Esophagus muscularis mucosa (tissue), 4 donors: ENCODE measurements at regions of chr15 and their contacts with region 1.

Region 1: GRCh38 chr15:64046347-64047153 is at the start of gene DAPK2:
- DNase-seq: no peak
- H3K4me3 ChIP-seq: peak within 1 kb of the TSS; percentile 61 to 65 (median 62)
- H3K27ac ChIP-seq: peak within 1 kb of the TSS in 1 of 4 donors; percentile 46
- H3K4me1 ChIP-seq: peaks cover 16 to 27% (median 21%) of the 10 kb centered on the region in 4 donors
- H3K27me3 ChIP-seq: peaks cover 0 to 26% (median 0%) of the 10 kb centered on the region in 4 donors
- CTCF ChIP-seq: peak; percentile 65 to 73 (median 73)
- EP300 ChIP-seq: no peak
- POLR2A ChIP-seq: no peak
- total RNA-seq, gene DAPK2: 1.5 to 11.2 (median 7.3) TPM

Region 2: DNA sequence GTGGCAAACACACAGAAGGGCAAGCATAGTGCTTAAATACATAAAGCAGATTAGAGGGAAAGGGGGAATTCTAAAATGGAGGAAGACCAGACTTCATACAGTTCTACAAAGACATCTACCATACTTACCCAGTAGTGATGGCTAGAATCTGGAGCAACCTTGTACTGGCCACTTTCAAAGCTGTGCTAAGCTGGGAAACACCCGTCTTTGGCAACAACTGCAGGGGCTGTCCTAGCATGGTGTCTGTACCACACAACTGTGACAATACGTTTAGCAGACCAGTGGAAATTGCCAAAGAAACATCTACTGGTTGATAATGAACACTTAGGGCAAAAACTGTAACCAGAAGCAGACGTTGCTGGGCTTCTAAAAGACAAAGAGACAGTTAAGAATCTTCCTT is 352.4 kb before region 1 on chr15:
- intact Hi-C with region 1: no loop called
- DNase-seq: no peak
- H3K4me3 ChIP-seq: no peak overlapping the region
- H3K27ac ChIP-seq: no peak overlapping the region
- H3K4me1 ChIP-seq: no peaks in the 10 kb centered on the region
- H3K27me3 ChIP-seq: no peaks in the 10 kb centered on the region
- CTCF ChIP-seq: no peak
- EP300 ChIP-seq: no peak
- POLR2A ChIP-seq: no peak

Region 3: GRCh38 chr15:63833021-63833696 is 213.4 kb before region 1 on chr15:
- intact Hi-C with region 1: loop called (anchors 10 kb)
- DNase-seq: no peak
- H3K4me3 ChIP-seq: peak overlapping the region; percentile 76 to 87 (median 79)
- H3K27ac ChIP-seq: peak overlapping the region; percentile 88 to 94 (median 92)
- H3K4me1 ChIP-seq: peaks cover 17 to 47% (median 33%) of the 10 kb centered on the region in 4 donors
- H3K27me3 ChIP-seq: no peaks in the 10 kb centered on the region
- CTCF ChIP-seq: no peak
- EP300 ChIP-seq: no peak
- POLR2A ChIP-seq: no peak

Region 4: DNA sequence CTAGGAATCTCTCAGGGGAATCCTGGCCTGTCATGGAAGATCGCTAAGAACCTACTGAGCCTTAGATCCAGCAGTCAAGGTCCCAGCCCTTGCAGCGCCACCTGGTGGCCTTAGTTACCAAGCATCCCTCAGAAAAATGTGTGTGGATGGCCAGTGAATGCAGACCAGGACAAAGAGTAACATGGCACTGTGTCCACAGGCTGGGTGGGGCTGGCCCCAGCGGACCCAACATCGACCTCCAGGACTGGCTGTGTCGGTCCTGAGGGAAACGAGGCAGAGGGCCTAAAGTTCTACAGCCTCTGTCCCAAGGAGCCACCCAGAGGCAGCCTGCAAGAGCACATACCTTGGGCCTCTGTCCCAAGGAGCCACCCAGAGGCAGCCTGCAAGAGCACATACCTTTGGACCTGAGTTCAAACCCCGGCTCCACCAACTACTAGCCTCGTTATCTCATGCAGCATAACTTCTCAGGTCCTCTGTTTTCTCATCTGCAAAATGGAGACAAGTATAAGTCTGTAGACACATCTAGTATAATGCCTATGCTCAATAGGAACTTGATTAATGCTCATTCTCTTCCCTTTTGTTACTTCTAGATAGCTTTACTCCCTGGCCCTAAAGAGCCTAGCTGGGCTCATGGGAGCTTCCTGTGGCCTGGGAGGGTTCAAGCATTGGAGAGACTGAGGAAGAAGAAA is 155.3 kb before region 1 on chr15:
- intact Hi-C with region 1: loop called (anchors 5 kb)
- DNase-seq: no peak
- H3K4me3 ChIP-seq: no peak overlapping the region
- H3K27ac ChIP-seq: no peak overlapping the region
- H3K4me1 ChIP-seq: peaks cover 1 to 14% (median 11%) of the 10 kb centered on the region in 4 donors
- H3K27me3 ChIP-seq: no peaks in the 10 kb centered on the region
- CTCF ChIP-seq: peak; percentile 76 to 93 (median 79)
- EP300 ChIP-seq: no peak
- POLR2A ChIP-seq: no peak

Region 5: DNA sequence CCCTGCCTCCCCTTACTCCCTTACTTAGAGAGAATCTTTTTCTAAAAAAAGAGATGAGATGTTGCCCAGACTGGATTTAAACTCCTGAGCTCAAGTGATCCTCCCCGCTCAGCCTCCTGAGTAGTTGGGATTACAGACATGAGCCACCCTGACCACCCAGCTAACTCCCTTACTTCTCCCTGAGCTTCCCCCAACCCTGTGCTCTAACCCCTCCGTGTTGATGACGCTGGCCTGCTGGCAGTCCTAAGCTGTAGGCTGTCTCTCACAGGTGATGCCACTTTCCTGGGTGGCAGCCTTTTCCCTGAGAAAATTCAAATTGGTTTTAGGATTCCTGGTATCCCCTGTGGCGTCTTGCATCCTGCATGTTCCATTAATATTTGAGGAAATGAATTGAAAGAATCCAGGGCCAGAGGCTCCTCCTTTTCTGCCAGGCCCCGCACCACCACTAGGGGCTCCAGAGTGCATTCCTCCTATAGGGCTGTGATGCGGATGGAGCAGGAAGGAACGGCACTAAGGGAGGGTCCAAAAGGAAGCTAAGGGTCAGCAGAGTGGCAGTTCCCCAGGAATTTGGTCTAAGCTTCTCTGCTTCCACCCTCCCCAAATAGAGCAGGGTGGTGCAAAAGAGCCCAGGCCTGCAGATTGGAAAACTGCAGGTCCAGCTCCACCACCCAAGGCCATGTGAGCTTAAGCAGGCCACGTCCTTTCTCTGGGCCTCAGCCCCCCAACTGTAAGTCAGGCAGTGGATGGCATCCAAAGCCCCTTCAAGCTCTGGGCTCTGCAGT is 101.4 kb before region 1 on chr15:
- intact Hi-C with region 1: loop called (anchors 5 kb)
- DNase-seq: peak; percentile 91
- H3K4me3 ChIP-seq: no peak overlapping the region
- H3K27ac ChIP-seq: no peak overlapping the region
- H3K4me1 ChIP-seq: peaks cover 10 to 22% (median 18%) of the 10 kb centered on the region in 4 donors
- H3K27me3 ChIP-seq: no peaks in the 10 kb centered on the region
- CTCF ChIP-seq: peak; percentile 70 to 97 (median 77)
- EP300 ChIP-seq: no peak
- POLR2A ChIP-seq: no peak